PC-3 (cell line): ENCODE measurements at regions of chr1 and their contacts with region 1.

Region 1: GRCh38 chr1:168082008-168082876 is 54.5 kb downstream of the GPR161 start:
- DNase-seq: peak; percentile 89
- ATAC-seq: peak; percentile 92
- H3K4me3 ChIP-seq: no peak overlapping the region
- H3K27ac ChIP-seq: no peak overlapping the region
- H3K4me1 ChIP-seq: peaks cover 6% of the 10 kb centered on the region; the same call in 1 of the 2 replicates
- H3K27me3 ChIP-seq: no peaks in the 10 kb centered on the region
- CTCF ChIP-seq: peak; percentile 97

Region 2: GRCh38 chr1:167721617-167722151 is 360.6 kb before region 1 on chr1 and contains the start of gene MPZL1:
- CTCF ChIA-PET with region 1: interaction called, 7 read pairs
- POLR2A ChIA-PET with region 1: interaction called, 3 read pairs
- intact Hi-C with region 1: loop called (anchors 1 kb)
- DNase-seq: peak; percentile 98
- ATAC-seq: peak; percentile 94
- H3K4me3 ChIP-seq: peak within 1 kb of the TSS; percentile 76
- H3K27ac ChIP-seq: peak within 1 kb of the TSS; percentile 35
- H3K4me1 ChIP-seq: peaks cover 24% of the 10 kb centered on the region
- H3K27me3 ChIP-seq: no peaks in the 10 kb centered on the region
- CTCF ChIP-seq: no peak
- total RNA-seq, gene MPZL1: 86.5 and 95.1 TPM in 2 replicates

Region 3: DNA sequence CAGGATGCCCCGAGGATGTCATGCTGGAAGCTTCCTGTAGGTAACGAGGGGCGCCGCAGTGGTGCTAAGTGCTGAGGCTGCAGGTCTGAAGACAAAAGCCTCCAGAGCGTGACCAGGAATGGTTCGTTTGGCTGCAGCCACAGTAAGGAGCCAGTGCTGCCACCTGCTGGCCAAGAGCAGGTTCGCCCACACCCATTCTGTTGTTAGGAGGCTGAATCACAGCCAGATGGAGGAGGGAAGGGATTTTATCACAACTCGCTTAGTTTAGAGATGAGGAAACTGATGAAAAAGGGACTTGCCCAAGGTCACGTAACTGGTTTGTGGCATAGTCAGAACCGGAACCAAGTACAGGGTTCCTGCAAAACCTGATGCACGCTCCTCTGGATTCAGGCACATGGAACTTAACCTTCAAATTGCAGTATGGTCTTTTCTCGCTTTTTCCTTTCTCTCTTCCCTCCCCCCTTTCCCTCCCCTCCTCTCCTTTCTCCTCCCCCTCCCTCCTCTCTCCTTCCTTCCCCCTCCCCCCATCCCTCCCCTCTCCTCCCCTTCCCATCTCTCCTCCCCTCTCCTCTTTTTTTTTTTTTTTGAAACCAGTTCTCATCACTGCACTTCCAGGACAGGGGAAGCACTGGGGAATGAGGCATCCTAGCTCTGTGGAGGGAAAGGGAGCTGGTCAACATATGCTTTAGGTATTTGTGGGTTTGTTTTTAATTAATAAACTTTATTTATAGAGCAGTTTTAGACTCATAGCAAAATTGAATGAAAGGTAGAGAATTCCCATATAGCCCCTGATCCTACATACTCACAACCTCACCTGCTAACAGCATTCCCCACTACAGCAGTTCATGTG is 278.7 kb before region 1 on chr1:
- CTCF ChIA-PET with region 1: no interaction called
- POLR2A ChIA-PET with region 1: no interaction called
- intact Hi-C with region 1: loop called (anchors 1 kb)
- DNase-seq: peak; percentile 98
- ATAC-seq: peak; percentile 100
- H3K4me3 ChIP-seq: no peak overlapping the region
- H3K27ac ChIP-seq: no peak overlapping the region
- H3K4me1 ChIP-seq: no peaks in the 10 kb centered on the region
- H3K27me3 ChIP-seq: no peaks in the 10 kb centered on the region
- CTCF ChIP-seq: peak; percentile 99

Region 4: GRCh38 chr1:167936068-167936929 is 145.9 kb before region 1 on chr1 and contains the start of gene DCAF6:
- CTCF ChIA-PET with region 1: interaction called, 25 read pairs
- POLR2A ChIA-PET with region 1: no interaction called
- intact Hi-C with region 1: loop called (anchors 5 kb)
- DNase-seq: peak; percentile 100
- ATAC-seq: peak; percentile 71
- H3K4me3 ChIP-seq: peak within 1 kb of the TSS; percentile 79
- H3K27ac ChIP-seq: peak within 1 kb of the TSS; percentile 88
- H3K4me1 ChIP-seq: peaks cover 22% of the 10 kb centered on the region
- H3K27me3 ChIP-seq: no peaks in the 10 kb centered on the region
- CTCF ChIP-seq: no peak
- total RNA-seq, gene DCAF6: 29.1 and 52.2 TPM in 2 replicates

Region 5: DNA sequence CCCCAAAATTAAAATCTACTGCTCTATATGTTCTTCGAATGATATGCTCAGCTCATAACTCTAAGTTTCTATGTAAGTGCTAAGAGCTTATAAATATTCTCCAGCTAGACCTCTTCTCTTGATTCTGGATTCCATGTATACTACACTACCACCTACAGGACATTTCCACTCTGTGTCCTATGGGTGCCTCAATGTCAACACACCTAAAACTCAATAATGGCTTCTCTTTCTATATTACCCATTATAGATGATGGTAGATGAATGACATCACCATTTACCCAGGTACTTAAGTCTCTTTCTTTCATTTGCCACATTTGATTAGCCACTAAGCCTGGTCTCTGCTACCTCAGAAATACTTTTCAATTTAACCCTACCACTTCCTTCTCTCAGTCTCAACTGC is 239.7 kb after region 1 on chr1:
- CTCF ChIA-PET with region 1: interaction called, 10 read pairs
- POLR2A ChIA-PET with region 1: no interaction called
- intact Hi-C with region 1: loop called (anchors 2 kb)
- DNase-seq: peak; percentile 75
- ATAC-seq: peak; percentile 79
- H3K4me3 ChIP-seq: no peak overlapping the region
- H3K27ac ChIP-seq: no peak overlapping the region
- H3K4me1 ChIP-seq: peaks cover 17% of the 10 kb centered on the region
- H3K27me3 ChIP-seq: no peaks in the 10 kb centered on the region
- CTCF ChIP-seq: peak; percentile 84